Activated T-helper 1 cell treated with anti-CD3 and anti-CD28 coated beads, Interleukin-12 subunit alpha, Interleukin-12 subunit beta, Interleukin-2, Interleukin-4 antibody, amounts not matched to agents 30 ng/mL and 10 ng/mL and 1 ng/mL, durations not matched to agents 14 hours and 24 hours and 36 hours (primary cell): ENCODE measurements at regions of chr17 and their contacts with region 1.

Region 1: DNA sequence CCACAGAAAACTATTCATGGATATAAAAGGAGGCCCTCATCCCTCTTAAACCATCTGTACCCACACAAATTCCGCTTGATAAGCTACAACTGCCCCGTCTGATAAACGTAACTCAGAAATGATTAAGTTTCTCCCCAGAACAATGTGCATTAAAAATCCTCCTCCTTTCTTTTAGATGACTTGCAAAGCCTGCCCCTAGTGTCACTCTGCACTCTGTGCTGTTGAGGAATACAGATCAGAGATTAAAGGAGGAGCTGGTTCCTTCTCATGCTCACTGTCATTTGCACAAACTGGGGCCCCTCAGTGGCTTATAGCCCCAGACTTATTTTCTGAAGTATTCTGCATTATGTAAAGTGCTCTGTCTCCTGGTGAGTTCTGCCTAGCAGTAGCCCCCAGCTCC is 33.3 kb downstream of the CDRT15 start:
- DNase-seq: peak; percentile 32
- H3K4me3 Mint-ChIP-seq: peak overlapping the region; percentile 24
- H3K27ac Mint-ChIP-seq: peak overlapping the region; percentile 85
- H3K4me1 Mint-ChIP-seq: peaks cover 90% of the 10 kb centered on the region
- H3K27me3 Mint-ChIP-seq: no peaks in the 10 kb centered on the region

Region 2: GRCh38 chr17:14135906-14136590 is 67.3 kb before region 1 on chr17:
- intact Hi-C with region 1: loop called (anchors 5 kb)
- DNase-seq: no peak
- H3K4me3 Mint-ChIP-seq: no peak overlapping the region
- H3K27ac Mint-ChIP-seq: no peak overlapping the region
- H3K4me1 Mint-ChIP-seq: peaks cover 24% of the 10 kb centered on the region
- H3K27me3 Mint-ChIP-seq: no peaks in the 10 kb centered on the region

Region 3: DNA sequence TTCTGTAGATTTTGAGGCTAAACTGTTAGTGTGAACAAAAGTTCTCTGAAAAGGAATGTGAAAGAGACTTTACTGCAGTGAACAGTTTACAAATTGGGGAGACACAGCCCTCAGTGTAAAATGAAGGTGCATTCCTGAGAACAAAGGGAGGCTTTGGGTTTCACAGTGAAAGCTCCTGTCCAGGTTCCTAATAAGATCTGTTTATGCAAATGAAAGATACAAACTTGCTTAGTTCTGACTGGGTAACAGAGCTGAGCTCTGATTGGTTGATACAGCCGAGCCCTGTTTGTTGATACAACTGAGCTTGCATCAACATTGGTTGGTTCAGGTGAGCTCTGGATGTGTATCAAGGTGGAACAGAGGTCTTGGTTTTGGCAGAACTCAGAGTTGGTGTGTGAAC is 41.6 kb after region 1 on chr17:
- intact Hi-C with region 1: no loop called
- DNase-seq: no peak
- H3K4me3 Mint-ChIP-seq: no peak overlapping the region
- H3K27ac Mint-ChIP-seq: no peak overlapping the region
- H3K4me1 Mint-ChIP-seq: no peaks in the 10 kb centered on the region
- H3K27me3 Mint-ChIP-seq: peaks cover 24% of the 10 kb centered on the region